Activated T-helper 1 cell treated with anti-CD3 and anti-CD28 coated beads, Interleukin-12 subunit alpha, Interleukin-12 subunit beta, Interleukin-2, Interleukin-4 antibody, amounts not matched to agents 30 ng/mL and 10 ng/mL and 1 ng/mL, durations not matched to agents 14 hours and 24 hours and 36 hours (primary cell): ENCODE measurements at regions of chr17 and their contacts with region 1.

Region 1: DNA sequence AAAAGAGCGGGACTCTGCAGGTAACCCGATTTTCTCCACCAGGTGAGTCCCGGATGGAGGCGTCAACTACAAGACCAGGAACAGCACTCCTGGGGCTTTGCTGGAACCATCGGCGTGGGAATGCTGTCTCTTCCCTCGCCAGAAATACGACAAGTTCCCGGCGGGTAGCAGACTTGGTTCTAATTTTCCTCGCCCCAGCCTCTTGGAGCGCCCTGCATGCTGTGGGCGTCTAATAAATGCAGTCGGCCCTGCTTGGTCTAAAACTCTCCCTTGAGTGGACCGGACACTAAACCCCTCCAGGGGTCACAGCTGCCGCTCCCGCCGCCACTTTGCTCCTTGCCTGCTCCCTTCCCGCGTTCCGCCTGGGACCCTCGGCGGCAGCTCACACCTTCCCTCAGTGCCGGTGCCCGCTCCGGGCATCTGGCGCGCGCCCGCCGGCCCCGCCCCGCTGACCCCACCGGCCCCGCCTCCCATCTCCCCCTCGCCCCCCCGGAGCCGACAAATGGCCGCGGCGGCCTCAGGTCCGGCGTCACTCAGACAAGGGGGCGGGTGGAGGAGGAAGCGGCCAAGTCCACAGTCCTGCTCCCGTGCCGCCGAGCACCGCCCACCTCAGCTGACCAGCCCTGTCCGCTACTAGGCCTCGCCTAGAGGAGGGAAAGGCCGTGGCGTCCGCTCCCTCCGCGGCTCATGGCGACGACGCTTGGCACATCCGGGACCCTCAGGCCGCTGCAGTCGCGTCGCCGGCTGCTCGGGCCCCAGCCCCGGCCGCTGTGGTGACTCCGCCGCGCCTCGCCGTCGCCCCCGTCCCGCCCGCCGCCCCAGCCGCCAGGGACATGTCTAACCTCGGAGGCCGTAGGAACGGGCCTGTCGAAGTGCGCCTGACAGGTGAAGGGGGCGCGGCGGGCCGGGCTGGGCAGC is 65.8 kb downstream of the KPNA2 start:
- DNase-seq: peak; percentile 44
- H3K4me3 Mint-ChIP-seq: peak overlapping the region; percentile 88
- H3K27ac Mint-ChIP-seq: peak overlapping the region; percentile 72
- H3K4me1 Mint-ChIP-seq: peaks cover 22% of the 10 kb centered on the region
- H3K27me3 Mint-ChIP-seq: peaks cover 19% of the 10 kb centered on the region

Region 2: GRCh38 chr17:67912656-67913055 is 188.7 kb before region 1 on chr17:
- intact Hi-C with region 1: no loop called
- DNase-seq: no peak
- H3K4me3 Mint-ChIP-seq: no peak overlapping the region
- H3K27ac Mint-ChIP-seq: no peak overlapping the region
- H3K4me1 Mint-ChIP-seq: peaks cover 17% of the 10 kb centered on the region
- H3K27me3 Mint-ChIP-seq: no peaks in the 10 kb centered on the region

Region 3: DNA sequence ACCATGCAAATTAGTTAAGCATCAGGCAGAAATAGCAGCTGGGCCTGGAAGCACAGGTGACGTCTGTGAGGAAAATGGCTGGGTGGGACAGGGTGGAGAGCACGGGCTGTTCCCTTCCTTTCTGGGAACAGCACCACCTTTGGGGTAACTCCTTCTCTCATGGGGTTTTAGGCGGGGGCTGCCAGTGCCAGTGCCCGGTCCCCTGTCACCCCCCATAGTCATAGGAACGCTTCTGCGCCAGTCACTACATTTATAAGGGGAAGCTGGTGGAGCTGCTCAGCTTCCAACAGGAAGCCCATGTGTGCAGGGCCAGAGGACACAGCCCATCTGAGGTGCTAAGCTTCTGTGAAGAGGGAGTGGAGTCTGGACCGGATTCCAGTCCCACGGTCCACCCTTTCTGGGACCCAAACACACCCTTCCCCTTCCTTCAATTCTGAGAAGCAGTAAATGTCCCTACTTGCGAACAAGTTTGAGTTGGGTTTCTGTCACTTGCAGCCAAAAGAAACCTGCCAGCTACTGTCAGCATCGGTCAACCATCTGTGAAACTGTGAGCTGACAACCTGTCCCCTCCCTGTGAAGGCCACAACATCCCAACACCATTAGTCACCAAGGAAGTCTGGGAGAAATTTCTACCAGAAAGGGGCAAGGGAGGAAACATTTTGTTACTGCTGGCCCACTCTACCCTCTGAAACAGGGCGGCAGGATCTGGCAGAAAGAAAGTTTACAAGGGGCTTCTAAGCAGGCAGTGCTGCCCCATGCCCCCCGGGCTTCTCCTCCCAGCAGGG is 60.5 kb after region 1 on chr17:
- intact Hi-C with region 1: no loop called
- DNase-seq: no peak
- H3K4me3 Mint-ChIP-seq: no peak overlapping the region
- H3K27ac Mint-ChIP-seq: no peak overlapping the region
- H3K4me1 Mint-ChIP-seq: no peaks in the 10 kb centered on the region
- H3K27me3 Mint-ChIP-seq: peaks cover 5% of the 10 kb centered on the region

Region 4: GRCh38 chr17:68196944-68197595 is 95.7 kb after region 1 on chr17:
- intact Hi-C with region 1: loop called (anchors 5 kb)
- DNase-seq: no peak
- H3K4me3 Mint-ChIP-seq: peak overlapping the region; percentile 15
- H3K27ac Mint-ChIP-seq: no peak overlapping the region
- H3K4me1 Mint-ChIP-seq: peaks cover 17% of the 10 kb centered on the region
- H3K27me3 Mint-ChIP-seq: peaks cover 60% of the 10 kb centered on the region